ENCODE measurements at regions of chr6 and their contacts with region 1.

Region 1: DNA sequence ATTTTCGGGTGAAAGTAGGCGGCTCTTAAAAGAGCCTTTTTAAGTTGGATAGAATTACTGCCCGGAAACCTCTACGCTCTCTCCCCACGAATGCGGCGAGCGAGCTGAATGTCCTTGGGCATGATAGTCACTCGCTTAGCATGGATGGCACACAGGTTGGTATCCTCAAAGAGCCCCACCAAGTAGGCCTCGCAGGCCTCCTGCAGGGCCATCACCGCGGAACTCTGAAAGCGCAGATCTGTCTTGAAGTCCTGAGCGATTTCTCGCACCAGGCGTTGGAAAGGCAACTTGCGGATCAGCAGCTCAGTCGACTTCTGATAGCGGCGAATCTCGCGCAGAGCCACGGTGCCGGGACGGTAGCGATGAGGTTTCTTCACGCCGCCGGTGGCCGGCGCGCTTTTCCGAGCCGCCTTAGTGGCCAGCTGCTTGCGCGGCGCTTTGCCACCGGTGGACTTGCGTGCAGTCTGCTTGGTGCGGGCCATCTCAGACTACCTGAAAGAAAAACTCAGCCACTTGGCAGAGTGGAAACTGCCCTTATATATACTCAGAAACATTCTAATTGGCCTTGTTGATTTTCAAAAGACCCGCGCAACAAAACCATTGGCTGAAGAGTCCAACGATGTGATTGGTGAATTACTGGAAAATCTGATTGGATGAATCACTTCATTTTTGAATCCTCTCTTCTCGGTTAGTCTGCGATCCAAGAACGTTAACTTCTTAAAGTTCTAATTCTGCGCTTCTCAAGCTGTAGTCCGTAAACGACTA is 93.9 kb upstream of the BTN3A2 start:
- DNase-seq: peak; percentile 87
- H3K4me3 Mint-ChIP-seq: no peak overlapping the region
- H3K27ac Mint-ChIP-seq: no peak overlapping the region
- H3K4me1 Mint-ChIP-seq: peaks cover 35% of the 10 kb centered on the region
- H3K27me3 Mint-ChIP-seq: no peaks in the 10 kb centered on the region

Region 2: DNA sequence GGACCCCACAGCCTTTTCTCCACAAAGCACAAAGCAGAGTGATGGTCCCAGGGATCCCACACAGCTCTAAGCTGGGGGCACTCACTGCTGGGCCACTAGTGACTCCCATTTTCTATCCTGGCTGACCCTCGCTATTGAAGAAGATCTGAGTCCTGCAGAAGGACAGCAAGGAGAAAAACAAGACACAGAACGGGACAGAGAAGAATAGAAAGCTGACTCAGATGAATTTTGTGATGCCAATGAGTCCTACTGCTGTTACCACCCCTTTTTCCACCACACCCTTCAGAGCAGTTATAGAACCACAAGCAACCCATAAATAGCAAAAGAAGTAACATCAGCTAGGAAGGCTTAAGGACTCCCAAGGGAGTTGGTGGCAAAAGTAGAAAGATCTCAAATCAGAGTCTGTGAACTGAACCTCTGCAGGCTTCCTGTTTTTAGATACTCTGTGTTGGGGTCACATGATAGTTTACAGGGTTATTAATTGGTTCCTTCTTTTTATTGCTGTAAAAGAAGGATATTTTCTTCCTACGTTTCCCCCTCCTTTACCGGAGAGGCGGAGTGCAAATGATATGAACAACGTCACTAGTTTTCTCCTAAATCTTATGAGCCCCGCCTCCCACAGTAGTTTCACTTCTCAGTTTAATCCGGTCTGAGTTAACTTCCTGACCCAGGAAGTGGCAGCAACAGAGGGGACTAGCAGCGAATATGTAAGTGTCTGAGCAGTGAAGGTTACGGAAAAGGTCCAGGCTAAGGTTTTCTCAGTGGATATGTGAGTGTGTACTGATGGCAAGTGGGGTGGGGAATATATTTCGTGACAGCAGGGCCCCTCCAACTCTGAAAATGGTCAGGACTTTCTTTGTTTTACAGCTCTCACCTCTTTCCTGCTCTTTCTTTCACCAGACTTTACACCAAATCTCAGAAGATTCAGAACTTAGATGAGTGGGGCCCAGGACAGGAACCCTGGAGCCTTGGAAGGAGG is 308.6 kb before region 1 on chr6 and contains the start of gene TRIM38:
- CTCF ChIA-PET with region 1: no interaction called
- POLR2A ChIA-PET with region 1: no interaction called
- DNase-seq: peak; percentile 84
- H3K4me3 Mint-ChIP-seq: peak within 1 kb of the TSS; percentile 96
- H3K27ac Mint-ChIP-seq: peak within 1 kb of the TSS; percentile 96
- H3K4me1 Mint-ChIP-seq: peaks cover 80% of the 10 kb centered on the region
- H3K27me3 Mint-ChIP-seq: no peaks in the 10 kb centered on the region
- total RNA-seq, gene TRIM38: 32.6 to 33.5 TPM

Region 3: DNA sequence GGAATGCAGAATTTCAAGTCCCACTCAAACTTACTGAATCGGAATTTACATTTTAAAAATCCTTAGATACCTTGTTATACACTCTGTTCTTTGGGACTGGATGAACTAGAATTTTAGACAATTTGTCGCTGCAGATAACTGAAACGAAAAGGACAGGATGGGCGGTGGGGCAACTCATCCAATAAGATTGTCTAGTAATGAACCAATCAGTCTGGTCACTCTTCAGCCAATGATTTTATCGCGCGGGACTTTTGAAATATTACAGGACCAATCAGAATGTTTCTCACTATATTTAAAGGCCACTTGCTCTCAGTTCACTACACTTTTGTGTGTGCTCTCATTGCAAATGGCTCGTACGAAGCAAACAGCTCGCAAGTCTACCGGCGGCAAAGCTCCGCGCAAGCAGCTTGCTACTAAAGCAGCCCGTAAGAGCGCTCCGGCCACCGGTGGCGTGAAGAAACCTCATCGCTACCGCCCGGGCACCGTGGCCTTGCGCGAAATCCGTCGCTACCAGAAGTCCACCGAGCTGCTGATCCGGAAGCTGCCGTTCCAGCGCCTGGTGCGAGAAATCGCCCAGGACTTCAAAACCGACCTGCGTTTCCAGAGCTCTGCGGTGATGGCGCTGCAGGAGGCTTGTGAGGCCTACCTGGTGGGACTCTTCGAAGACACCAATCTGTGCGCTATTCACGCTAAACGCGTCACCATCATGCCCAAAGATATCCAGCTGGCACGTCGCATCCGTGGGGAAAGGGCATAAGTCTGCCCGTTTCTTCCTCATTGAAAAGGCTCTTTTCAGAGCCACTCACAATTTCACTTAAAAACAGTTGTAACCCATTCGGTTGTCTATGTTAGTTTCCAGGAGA is 225.8 kb before region 1 on chr6:
- CTCF ChIA-PET with region 1: no interaction called
- POLR2A ChIA-PET with region 1: interaction called, 80 read pairs
- DNase-seq: peak; percentile 82
- H3K4me3 Mint-ChIP-seq: peak overlapping the region; percentile 79
- H3K27ac Mint-ChIP-seq: peak overlapping the region; percentile 99
- H3K4me1 Mint-ChIP-seq: peaks cover 44% of the 10 kb centered on the region
- H3K27me3 Mint-ChIP-seq: no peaks in the 10 kb centered on the region

Region 4: DNA sequence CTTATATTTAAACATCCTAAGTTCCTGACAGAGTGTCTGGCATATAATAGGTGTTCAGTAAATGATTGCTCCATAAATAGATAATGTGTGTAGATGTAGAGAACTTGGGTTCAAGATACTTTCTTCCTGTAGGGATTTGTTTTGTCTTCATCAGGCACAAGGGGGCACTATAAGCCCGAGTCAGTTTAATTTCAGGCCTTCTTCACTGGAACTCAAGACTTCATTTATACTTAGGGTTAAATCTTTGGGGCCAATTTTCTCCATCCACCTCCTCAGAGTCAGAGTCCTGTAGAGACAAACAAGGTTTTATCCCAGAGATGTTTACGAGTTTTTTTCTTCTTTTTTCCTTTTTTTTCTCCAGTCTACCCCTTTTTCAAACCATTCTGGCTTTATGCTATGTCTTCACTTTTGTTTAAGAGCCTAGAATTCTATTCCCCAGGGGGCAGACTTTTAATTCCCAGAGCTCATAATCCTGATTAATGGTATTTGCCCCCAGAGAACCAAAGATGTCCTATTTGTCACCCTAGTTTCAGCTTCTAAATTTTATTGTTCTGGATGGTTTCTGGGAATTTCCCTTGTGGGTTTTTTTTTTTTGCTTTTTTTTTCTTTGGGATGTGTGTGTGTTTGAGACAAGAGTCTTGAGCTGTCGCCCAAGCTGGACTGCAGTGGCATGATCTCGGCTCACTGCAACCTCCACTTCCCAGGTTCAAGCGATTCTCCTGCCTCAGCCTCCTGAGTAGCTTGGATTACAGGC is 95.5 kb before region 1 on chr6:
- CTCF ChIA-PET with region 1: interaction called, 3 read pairs
- POLR2A ChIA-PET with region 1: interaction called, 103 read pairs
- DNase-seq: peak; percentile 68
- H3K4me3 Mint-ChIP-seq: peak overlapping the region; percentile 5
- H3K27ac Mint-ChIP-seq: peak overlapping the region; percentile 50
- H3K4me1 Mint-ChIP-seq: peaks cover 44% of the 10 kb centered on the region
- H3K27me3 Mint-ChIP-seq: no peaks in the 10 kb centered on the region

Region 5: GRCh38 chr6:26249957-26250697 is 21.0 kb before region 1 on chr6:
- CTCF ChIA-PET with region 1: interaction called, 29 read pairs
- POLR2A ChIA-PET with region 1: no interaction called
- DNase-seq: peak; percentile 84
- H3K4me3 Mint-ChIP-seq: peak overlapping the region; percentile 90
- H3K27ac Mint-ChIP-seq: peak overlapping the region; percentile 93
- H3K4me1 Mint-ChIP-seq: peaks cover 42% of the 10 kb centered on the region
- H3K27me3 Mint-ChIP-seq: no peaks in the 10 kb centered on the region

Region 6: DNA sequence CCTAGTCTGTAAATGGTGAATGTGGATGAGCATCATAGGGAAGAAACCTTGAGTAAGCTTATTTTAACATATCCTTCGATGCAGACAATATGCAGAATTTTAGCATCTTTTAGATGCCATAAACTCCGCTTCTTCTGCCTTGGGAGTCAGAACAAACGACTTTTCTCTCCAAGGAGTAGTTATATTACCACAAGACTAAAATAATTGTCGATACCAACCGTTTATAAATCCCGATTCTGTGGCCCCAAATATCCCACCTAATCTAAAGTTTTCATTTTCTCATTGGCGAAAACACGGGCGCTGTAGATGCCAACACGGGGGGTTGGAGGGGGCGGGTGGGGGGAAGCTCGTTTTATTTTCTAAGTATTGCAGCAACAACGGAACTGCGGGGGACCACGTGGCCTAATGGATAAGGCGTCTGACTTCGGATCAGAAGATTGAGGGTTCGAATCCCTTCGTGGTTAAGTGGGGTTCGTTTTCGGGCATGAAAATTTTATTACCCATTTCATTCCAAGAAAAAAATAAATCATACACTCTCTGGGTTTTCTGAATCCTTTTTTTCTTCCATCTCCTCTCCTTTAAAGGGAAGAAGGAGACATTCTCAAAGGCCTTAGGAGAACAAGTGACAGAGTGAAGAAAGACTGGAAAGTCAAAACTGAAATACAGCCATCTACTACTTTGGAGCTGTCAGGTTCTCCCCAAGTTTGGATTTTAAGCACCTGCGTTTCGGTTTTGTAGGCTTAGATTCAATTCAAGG is 28.4 kb after region 1 on chr6:
- CTCF ChIA-PET with region 1: no interaction called
- POLR2A ChIA-PET with region 1: no interaction called
- DNase-seq: no peak
- H3K4me3 Mint-ChIP-seq: no peak overlapping the region
- H3K27ac Mint-ChIP-seq: no peak overlapping the region
- H3K4me1 Mint-ChIP-seq: peaks cover 22% of the 10 kb centered on the region
- H3K27me3 Mint-ChIP-seq: no peaks in the 10 kb centered on the region

Region 7: GRCh38 chr6:26322645-26323482 is 51.8 kb after region 1 on chr6:
- CTCF ChIA-PET with region 1: interaction called, 9 read pairs
- POLR2A ChIA-PET with region 1: interaction called, 14 read pairs
- DNase-seq: peak; percentile 54
- H3K4me3 Mint-ChIP-seq: peak overlapping the region; percentile 81
- H3K27ac Mint-ChIP-seq: peak overlapping the region; percentile 70
- H3K4me1 Mint-ChIP-seq: peaks cover 38% of the 10 kb centered on the region
- H3K27me3 Mint-ChIP-seq: peaks cover 25% of the 10 kb centered on the region

Region 8: DNA sequence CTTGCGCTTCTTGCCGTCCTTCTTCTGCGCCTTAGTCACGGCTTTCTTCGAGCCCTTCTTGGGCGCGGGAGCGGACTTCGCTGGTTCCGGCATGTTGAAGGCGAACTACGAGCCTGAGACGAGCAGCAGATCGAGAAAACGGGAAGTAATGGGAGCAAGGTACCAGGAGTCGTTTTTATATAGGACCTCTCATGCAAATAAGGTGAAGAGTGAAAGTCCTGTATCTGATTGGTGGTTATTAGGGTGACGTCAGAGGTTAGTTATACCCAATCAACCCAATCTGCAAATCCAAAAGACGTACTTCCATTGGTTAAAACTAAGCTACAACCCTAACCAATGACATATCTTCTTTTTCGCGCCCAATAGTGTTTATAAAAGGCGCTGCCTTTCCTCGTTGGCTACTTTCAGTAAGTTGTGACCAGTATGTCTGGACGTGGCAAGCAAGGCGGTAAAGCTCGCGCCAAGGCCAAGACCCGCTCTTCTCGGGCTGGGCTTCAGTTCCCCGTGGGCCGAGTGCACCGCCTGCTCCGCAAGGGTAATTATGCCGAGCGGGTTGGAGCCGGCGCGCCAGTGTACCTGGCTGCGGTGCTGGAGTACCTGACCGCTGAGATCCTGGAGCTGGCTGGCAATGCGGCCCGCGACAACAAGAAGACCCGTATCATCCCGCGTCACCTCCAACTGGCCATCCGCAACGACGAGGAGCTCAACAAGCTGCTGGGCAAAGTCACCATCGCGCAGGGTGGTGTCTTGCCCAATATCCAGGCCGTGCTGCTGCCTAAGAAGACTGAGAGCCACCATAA is 875.8 kb after region 1 on chr6:
- CTCF ChIA-PET with region 1: no interaction called
- POLR2A ChIA-PET with region 1: interaction called, 71 read pairs
- DNase-seq: peak; percentile 87
- H3K4me3 Mint-ChIP-seq: no peak overlapping the region
- H3K27ac Mint-ChIP-seq: no peak overlapping the region
- H3K4me1 Mint-ChIP-seq: peaks cover 31% of the 10 kb centered on the region
- H3K27me3 Mint-ChIP-seq: no peaks in the 10 kb centered on the region